OCI-LY7 (cell line): ENCODE measurements at regions of chr9 and their contacts with region 1.

Region 1: DNA sequence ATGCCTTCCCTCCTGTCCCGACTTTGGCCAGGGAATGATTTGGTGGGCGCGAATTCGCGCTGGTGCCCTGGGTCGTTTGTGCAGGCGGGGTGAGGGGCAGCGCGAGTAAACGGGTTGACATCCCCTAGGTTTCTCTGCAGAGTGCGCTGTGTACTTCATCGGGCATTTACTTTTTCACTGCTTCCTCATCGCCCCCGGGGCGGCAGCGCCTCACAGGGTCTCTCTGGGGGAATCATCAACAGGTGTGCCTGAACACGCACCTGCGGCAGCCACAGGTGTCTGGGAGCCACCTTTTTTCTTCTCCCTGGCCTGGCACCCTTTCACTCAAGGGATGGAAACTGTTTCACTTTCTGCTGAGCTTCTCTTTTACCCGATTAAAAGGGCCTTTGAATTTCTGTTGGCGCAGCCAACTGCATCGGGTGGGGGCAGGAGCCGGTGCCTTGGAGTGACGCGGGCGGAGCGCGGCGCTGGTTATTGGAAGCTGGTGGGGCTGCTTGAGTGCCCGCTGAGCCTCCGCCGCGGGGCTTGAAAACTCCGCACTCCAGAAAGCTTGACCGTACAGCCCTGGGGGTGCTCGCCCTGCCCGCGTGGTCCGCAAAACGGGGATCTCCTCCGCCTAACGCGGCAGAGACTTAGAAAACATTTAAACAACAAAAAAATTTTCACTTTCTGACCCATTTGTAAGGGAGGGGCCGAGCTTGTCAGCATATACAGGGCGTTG is 52.1 kb upstream of the TJP2 start:
- DNase-seq: peak; percentile 90
- H3K4me3 ChIP-seq: peak overlapping the region; percentile 65
- H3K27ac ChIP-seq: peak overlapping the region; percentile 60
- H3K4me1 ChIP-seq: peaks cover 19% of the 10 kb centered on the region
- CTCF ChIP-seq: peak; percentile 62

Region 2: DNA sequence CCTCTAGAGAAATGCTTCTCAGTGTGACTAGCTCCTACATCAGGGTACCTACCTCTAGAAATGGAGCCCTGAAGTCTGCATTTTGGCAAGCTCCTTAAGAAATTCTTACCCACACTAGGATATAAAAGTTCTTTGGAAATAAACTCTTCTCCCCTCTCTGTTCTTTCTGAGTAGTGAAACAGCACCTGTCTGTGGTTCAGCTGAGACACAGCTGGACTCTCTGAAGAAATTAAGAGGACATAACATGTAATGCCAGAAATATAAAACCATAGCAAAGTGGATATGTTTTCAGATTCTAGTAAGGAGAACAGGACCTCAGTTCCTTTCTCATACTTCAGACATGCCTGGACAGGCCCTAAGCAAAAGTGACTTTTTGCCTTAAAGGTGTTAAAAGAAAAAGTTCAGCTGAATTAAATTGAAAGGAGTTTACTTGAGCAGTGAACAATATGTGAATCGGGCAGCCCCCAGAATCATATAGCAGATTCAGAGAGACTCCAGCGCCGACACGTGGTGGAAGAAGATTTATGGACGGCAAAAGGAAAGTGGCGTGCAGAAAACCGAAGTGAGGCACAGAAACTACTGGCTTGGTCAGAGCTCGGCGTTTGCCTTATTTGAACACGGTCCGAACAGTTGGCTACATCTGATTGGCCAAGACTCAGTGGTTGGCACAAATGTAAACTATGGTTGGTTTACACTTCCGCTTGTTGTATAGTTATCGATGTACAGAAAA is 172.6 kb before region 1 on chr9:
- CTCF ChIA-PET with region 1: no interaction called
- POLR2A ChIA-PET with region 1: no interaction called
- intact Hi-C with region 1: no loop called
- DNase-seq: peak; percentile 76
- H3K4me3 ChIP-seq: no peak overlapping the region
- H3K27ac ChIP-seq: peak overlapping the region; percentile 39
- H3K4me1 ChIP-seq: peaks cover 63% of the 10 kb centered on the region
- CTCF ChIP-seq: peak; percentile 78

Region 3: GRCh38 chr9:69174616-69175463 is 52.9 kb after region 1 on chr9:
- CTCF ChIA-PET with region 1: no interaction called
- POLR2A ChIA-PET with region 1: interaction called, 3 read pairs
- intact Hi-C with region 1: loop called (anchors 5 kb)
- DNase-seq: peak; percentile 18
- H3K4me3 ChIP-seq: peak overlapping the region; percentile 72
- H3K27ac ChIP-seq: no peak overlapping the region
- H3K4me1 ChIP-seq: peaks cover 23% of the 10 kb centered on the region
- CTCF ChIP-seq: no peak